Calu3 (cell line): ENCODE measurements at regions of chr12 and their contacts with region 1.

Region 1: GRCh38 chr12:56117778-56118687 is at the start of gene ZC3H10:
- DNase-seq: peak; percentile 99
- H3K4me3 Mint-ChIP-seq: peak within 1 kb of the TSS; percentile 97
- H3K27ac Mint-ChIP-seq: peak within 1 kb of the TSS; percentile 100
- H3K4me1 Mint-ChIP-seq: peaks cover 17% of the 10 kb centered on the region
- H3K27me3 Mint-ChIP-seq: no peaks in the 10 kb centered on the region
- CTCF ChIP-seq: peak; percentile 21
- total RNA-seq, gene ZC3H10: 6.6 and 8.2 TPM in 2 replicates

Region 2: GRCh38 chr12:55996715-55997534 is 121.1 kb before region 1 on chr12 and contains the start of gene SUOX:
- CTCF ChIA-PET with region 1: no interaction called
- intact Hi-C with region 1: loop called (anchors 2 kb)
- DNase-seq: peak; percentile 97
- H3K4me3 Mint-ChIP-seq: peak within 1 kb of the TSS; percentile 90
- H3K27ac Mint-ChIP-seq: peak within 1 kb of the TSS; percentile 91
- H3K4me1 Mint-ChIP-seq: peaks cover 36% of the 10 kb centered on the region
- H3K27me3 Mint-ChIP-seq: no peaks in the 10 kb centered on the region
- CTCF ChIP-seq: no peak
- total RNA-seq, gene SUOX: 31.1 and 34.9 TPM in 2 replicates

Region 3: DNA sequence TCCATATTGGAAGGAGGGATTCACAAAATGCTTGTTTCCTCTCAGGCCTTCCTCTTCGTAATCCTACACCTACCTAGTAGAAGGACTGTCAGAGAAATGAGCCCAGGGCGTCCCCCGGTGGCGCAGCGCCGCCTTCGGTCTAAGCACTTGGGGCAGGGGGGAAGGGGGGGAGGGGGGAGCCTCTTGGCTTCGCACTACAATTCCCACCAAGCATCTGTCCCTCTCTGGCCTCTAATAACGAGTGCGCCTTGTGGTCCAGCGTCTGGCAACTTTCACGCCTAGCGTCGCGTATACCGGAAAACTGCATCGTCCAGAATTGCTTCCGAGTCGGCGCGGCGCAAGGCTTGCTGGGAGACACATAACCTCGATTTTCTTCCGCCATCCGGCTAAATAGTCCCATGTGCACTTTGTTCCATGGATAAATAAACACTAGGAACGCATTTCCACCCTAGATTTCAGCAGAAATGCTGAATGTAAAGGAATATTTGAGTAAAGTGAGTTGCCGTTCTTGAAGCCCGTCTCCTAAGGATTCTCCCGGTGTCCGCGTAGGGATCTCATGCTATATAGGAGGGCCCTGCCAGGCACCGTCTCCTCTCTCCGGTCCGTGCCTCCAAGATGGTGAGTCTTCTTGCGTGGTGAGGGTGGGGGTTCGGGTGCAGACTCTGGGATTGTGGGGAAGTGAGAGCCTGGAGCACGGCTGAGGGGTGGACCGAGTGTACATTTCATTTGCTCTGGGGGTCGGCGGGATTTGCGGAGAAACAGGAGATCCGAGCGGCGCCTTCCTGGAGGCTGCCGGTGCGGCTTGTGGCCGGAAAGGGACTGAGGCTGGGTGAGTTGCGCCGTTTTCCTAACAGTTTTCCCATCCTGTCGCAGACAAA is 76.2 kb before region 1 on chr12 and contains the start of gene RPS26:
- CTCF ChIA-PET with region 1: interaction called, 3 read pairs
- intact Hi-C with region 1: loop called (anchors 5 kb)
- DNase-seq: peak; percentile 93
- H3K4me3 Mint-ChIP-seq: peak within 1 kb of the TSS; percentile 90
- H3K27ac Mint-ChIP-seq: peak within 1 kb of the TSS; percentile 95
- H3K4me1 Mint-ChIP-seq: peaks cover 18% of the 10 kb centered on the region
- H3K27me3 Mint-ChIP-seq: no peaks in the 10 kb centered on the region
- CTCF ChIP-seq: peak; percentile 51
- total RNA-seq, gene RPS26: 50.6 and 50.7 TPM in 2 replicates

Region 4: DNA sequence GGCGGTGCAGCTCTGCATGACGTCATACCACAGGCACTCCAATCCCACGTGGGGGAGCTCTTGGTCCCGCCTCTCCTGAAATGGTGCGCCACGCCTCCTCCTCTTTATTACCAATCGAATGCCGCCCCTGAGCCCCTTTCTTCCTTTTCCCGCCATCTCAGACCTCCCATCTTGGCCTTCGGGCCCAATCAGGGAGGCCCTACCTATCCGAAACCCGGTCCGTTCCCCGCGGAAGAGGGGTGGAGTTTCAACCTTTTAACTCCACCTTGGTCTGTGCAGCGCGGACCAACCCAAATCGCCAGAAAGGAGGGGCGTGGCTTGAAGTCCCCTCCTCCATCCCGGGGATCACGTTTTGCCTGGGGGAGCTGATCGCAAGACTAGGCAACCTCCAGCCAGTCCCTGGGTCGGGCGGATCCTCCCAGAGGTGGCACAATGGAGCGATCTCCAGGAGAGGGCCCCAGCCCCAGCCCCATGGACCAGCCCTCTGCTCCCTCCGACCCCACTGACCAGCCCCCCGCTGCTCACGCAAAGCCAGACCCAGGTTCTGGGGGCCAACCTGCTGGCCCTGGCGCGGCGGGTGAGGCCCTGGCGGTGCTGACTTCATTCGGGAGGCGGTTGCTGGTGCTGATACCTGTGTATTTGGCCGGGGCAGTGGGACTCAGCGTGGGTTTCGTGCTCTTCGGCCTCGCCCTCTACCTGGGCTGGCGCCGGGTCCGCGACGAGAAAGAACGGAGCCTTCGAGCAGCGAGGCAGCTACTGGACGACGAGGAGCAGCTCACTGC is 10.0 kb after region 1 on chr12 and contains the start of gene ESYT1:
- CTCF ChIA-PET with region 1: interaction called, 16 read pairs
- intact Hi-C with region 1: no loop called
- DNase-seq: peak; percentile 99
- H3K4me3 Mint-ChIP-seq: peak within 1 kb of the TSS; percentile 98
- H3K27ac Mint-ChIP-seq: peak within 1 kb of the TSS; percentile 72
- H3K4me1 Mint-ChIP-seq: peaks cover 35% of the 10 kb centered on the region
- H3K27me3 Mint-ChIP-seq: no peaks in the 10 kb centered on the region
- CTCF ChIP-seq: no peak
- total RNA-seq, gene ESYT1: 72.7 and 91.1 TPM in 2 replicates

Region 5: DNA sequence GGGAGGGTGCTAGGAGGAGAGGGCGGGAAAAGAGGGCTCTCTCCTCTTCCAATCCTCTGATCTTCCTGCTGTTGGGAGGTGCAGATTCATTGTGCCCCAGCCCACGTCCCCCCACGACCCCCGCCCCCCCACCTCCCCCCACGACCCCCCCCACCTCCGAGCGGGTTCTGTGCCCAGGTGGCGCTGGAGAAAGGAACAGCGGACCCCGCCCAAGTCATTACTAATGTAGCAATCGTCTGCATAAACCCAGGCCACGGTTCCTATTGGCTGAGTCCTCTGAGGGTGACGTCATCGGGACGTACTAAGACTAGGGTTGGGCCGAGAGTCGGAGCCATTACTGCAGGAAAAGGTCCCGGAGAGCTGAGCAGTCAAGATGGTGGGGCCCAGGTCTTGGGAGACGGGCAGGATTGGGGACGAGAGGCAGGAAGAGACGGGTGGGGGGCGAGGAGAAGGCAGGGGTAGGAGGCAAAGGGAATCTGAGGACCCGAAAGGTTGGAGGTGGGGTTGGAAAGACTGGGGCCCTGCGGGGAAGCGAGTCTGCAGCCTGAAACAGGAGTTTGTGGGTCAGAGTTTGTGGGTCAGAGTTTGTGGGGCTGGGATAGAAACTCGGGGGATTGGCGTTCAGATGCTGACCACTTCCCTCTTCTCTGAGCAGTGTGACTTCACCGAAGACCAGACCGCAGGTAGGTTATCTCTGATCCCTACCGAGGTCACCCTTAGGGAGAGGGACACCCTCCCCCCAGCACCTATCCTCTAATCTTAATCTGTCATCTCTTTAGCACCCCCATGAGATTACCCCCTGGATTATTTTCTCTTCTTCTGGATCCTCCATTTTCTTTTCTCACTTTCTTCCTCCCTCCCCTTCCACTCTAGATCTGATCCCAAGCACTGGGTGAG is 40.2 kb after region 1 on chr12 and contains the start of gene MYL6:
- CTCF ChIA-PET with region 1: interaction called, 4 read pairs
- intact Hi-C with region 1: loop called (anchors 5 kb)
- DNase-seq: peak; percentile 96
- H3K4me3 Mint-ChIP-seq: peak within 1 kb of the TSS; percentile 98
- H3K27ac Mint-ChIP-seq: peak within 1 kb of the TSS; percentile 100
- H3K4me1 Mint-ChIP-seq: peaks cover 32% of the 10 kb centered on the region
- H3K27me3 Mint-ChIP-seq: no peaks in the 10 kb centered on the region
- CTCF ChIP-seq: no peak
- total RNA-seq, gene MYL6: 1,037 and 1,130 TPM in 2 replicates

Region 6: GRCh38 chr12:56224102-56224701 is 106.2 kb after region 1 on chr12 and contains the start of gene NABP2:
- CTCF ChIA-PET with region 1: interaction called, 5 read pairs
- intact Hi-C with region 1: loop called (anchors 1 kb)
- DNase-seq: peak; percentile 99
- H3K4me3 Mint-ChIP-seq: peak within 1 kb of the TSS; percentile 78
- H3K27ac Mint-ChIP-seq: peak within 1 kb of the TSS; percentile 73
- H3K4me1 Mint-ChIP-seq: peaks cover 17% of the 10 kb centered on the region
- H3K27me3 Mint-ChIP-seq: no peaks in the 10 kb centered on the region
- CTCF ChIP-seq: peak; percentile 95
- total RNA-seq, gene NABP2: 55.5 and 63.3 TPM in 2 replicates

Region 7: GRCh38 chr12:56299853-56300643 is 182.0 kb after region 1 on chr12 and contains the start of gene CS:
- CTCF ChIA-PET with region 1: no interaction called
- intact Hi-C with region 1: loop called (anchors 2 kb)
- DNase-seq: peak; percentile 99
- H3K4me3 Mint-ChIP-seq: peak within 1 kb of the TSS; percentile 96
- H3K27ac Mint-ChIP-seq: peak within 1 kb of the TSS; percentile 92
- H3K4me1 Mint-ChIP-seq: peaks cover 29% of the 10 kb centered on the region
- H3K27me3 Mint-ChIP-seq: no peaks in the 10 kb centered on the region
- CTCF ChIP-seq: no peak
- total RNA-seq, gene CS: 212 and 254 TPM in 2 replicates